Activated naive CD4-positive, alpha-beta T cell treated with anti-CD3 and anti-CD28 coated beads for 36 hours (primary cell): ENCODE measurements at regions of chr19 and their contacts with region 1.

Region 1: GRCh38 chr19:50556282-50557008 is 11.8 kb downstream of the LRRC4B start:
- DNase-seq: peak; percentile 88
- H3K4me3 Mint-ChIP-seq: peak overlapping the region; percentile 84
- H3K27ac Mint-ChIP-seq: no peak overlapping the region
- H3K4me1 Mint-ChIP-seq: peaks cover 9% of the 10 kb centered on the region
- H3K27me3 Mint-ChIP-seq: peaks cover 57% of the 10 kb centered on the region

Region 2: GRCh38 chr19:50537762-50538230 is 18.6 kb before region 1 on chr19:
- CTCF ChIA-PET with region 1: interaction called, 44 read pairs
- intact Hi-C with region 1: loop called (anchors 1 kb)
- DNase-seq: peak; percentile 84
- H3K4me3 Mint-ChIP-seq: no peak overlapping the region
- H3K27ac Mint-ChIP-seq: peak overlapping the region; percentile 61
- H3K4me1 Mint-ChIP-seq: peaks cover 5% of the 10 kb centered on the region
- H3K27me3 Mint-ChIP-seq: peaks cover 15% of the 10 kb centered on the region

Region 3: DNA sequence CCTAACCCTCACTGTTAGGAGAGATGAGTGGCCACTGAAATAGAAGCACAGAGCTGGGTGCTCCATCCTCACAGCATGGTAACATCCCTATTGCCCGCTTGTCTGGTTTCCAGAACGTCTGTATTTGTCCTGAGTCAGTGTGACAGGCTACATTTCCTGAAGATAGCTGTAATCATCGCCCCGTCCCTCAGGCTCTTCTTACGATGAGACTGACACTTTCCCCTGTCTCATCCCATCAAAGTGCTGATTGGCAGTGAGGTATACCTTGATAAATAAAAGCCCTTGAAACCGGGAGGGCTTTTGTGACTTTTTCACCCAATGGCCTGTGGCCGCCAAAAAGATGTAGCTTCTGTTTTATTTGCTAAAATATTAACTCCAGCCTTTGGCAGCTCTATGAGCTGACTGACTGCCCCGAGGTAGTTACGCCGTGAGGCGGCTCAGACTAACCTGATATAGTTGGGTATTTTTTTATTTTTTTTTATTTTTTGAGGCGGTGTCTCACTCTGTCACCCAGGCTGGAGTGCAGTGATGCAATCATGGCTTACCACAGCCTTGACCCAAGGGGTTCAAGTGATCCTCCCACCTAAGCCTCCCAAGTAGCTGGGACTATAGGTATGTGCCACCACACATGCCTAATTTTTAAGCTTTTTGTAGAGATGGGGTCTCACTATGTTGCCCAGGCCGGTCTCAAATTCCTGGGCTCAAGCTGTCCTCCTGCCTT is 17.5 kb after region 1 on chr19:
- CTCF ChIA-PET with region 1: interaction called, 11 read pairs
- intact Hi-C with region 1: no loop called
- DNase-seq: no peak
- H3K4me3 Mint-ChIP-seq: no peak overlapping the region
- H3K27ac Mint-ChIP-seq: no peak overlapping the region
- H3K4me1 Mint-ChIP-seq: peaks cover 3% of the 10 kb centered on the region
- H3K27me3 Mint-ChIP-seq: peaks cover 10% of the 10 kb centered on the region